ENCODE measurements at regions of chr5 and their contacts with region 1.

Region 1: GRCh38 chr5:68711293-68712200 is 382.3 kb upstream of the SLC30A5 start:
- DNase-seq: peak in 1 of 2 donors; percentile 14
- ATAC-seq: peak in 1 of 2 donors; percentile 36
- H3K4me3 ChIP-seq: no peak overlapping the region
- H3K27ac ChIP-seq: peak overlapping the region; percentile 79 to 84 (median 82)
- H3K4me1 ChIP-seq: peaks cover 31 to 50% of the 10 kb centered on the region in 2 donors
- H3K27me3 ChIP-seq: no peaks in the 10 kb centered on the region
- CTCF ChIP-seq: no peak
- POLR2A ChIP-seq: no peak

Region 2: GRCh38 chr5:68343421-68343826 is 368.1 kb before region 1 on chr5:
- in situ Hi-C with region 1: no loop called
- intact Hi-C with region 1: loop called (anchors 5 kb)
- DNase-seq: peak; percentile 85 to 89
- ATAC-seq: peak; percentile 98 to 99
- H3K4me3 ChIP-seq: no peak overlapping the region
- H3K27ac ChIP-seq: peak overlapping the region; percentile 57 to 76 (median 68)
- H3K4me1 ChIP-seq: peaks cover 7 to 20% of the 10 kb centered on the region in 2 donors
- H3K27me3 ChIP-seq: no peaks in the 10 kb centered on the region
- CTCF ChIP-seq: no peak
- POLR2A ChIP-seq: no peak

Region 3: DNA sequence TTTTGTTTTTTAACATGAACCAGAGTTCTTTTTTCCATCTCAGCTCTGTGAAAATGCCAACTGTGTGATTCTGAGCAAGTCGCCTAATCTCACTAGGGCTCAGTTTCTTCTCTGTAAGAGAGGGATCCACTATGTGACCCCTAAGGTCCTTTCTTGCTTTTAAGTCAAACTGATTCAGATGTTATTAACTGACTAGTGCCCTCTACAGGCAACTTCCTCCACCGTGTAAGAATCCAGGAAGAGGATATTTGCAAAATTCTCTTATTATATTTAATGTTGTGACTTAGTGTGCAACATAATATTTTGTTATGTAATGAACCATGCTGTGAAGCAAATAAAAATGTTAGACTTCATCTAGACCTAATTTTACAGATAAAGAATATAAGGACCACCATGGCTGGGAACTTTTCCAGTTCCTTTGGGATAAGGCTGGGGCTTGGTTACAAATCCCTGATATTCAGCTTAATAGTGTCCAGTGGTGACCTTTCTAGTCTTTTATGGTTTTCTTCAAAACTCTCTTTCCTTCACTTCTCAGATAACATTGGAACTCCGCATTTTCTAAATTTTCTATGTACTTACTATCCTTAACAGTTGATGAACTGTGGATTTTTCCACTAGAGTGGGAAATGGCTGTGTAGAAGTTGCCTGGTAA is 251.3 kb before region 1 on chr5:
- in situ Hi-C with region 1: no loop called
- intact Hi-C with region 1: loop called (anchors 5 kb)
- DNase-seq: no peak
- ATAC-seq: peak in 1 of 2 donors; percentile 63
- H3K4me3 ChIP-seq: no peak overlapping the region
- H3K27ac ChIP-seq: no peak overlapping the region
- H3K4me1 ChIP-seq: peaks cover 0 to 16% of the 10 kb centered on the region in 2 donors
- H3K27me3 ChIP-seq: no peaks in the 10 kb centered on the region
- CTCF ChIP-seq: peak; percentile 52 to 71 (median 62)
- POLR2A ChIP-seq: no peak

Region 4: GRCh38 chr5:68725905-68726683 is 14.5 kb after region 1 on chr5:
- in situ Hi-C with region 1: no loop called
- intact Hi-C with region 1: loop called (anchors 2 kb)
- DNase-seq: no peak
- ATAC-seq: peak; percentile 69 to 79
- H3K4me3 ChIP-seq: no peak overlapping the region
- H3K27ac ChIP-seq: peak overlapping the region in 2 of 4 donors; percentile 42 to 61
- H3K4me1 ChIP-seq: peaks cover 27 to 29% of the 10 kb centered on the region in 2 donors
- H3K27me3 ChIP-seq: no peaks in the 10 kb centered on the region
- CTCF ChIP-seq: no peak
- POLR2A ChIP-seq: no peak

Region 5: GRCh38 chr5:68770551-68770950 is 59.0 kb after region 1 on chr5:
- in situ Hi-C with region 1: no loop called
- intact Hi-C with region 1: loop called (anchors 5 kb)
- DNase-seq: peak; percentile 2 to 19
- ATAC-seq: peak; percentile 69 to 88
- H3K4me3 ChIP-seq: no peak overlapping the region
- H3K27ac ChIP-seq: peak overlapping the region; percentile 16 to 62 (median 52)
- H3K4me1 ChIP-seq: peaks cover 19 to 28% of the 10 kb centered on the region in 2 donors
- H3K27me3 ChIP-seq: no peaks in the 10 kb centered on the region
- CTCF ChIP-seq: no peak
- POLR2A ChIP-seq: no peak

Region 6: GRCh38 chr5:68803881-68804319 is 92.4 kb after region 1 on chr5:
- in situ Hi-C with region 1: no loop called
- intact Hi-C with region 1: loop called (anchors 1 kb)
- DNase-seq: peak; percentile 69 to 80
- ATAC-seq: peak; percentile 88 to 90
- H3K4me3 ChIP-seq: no peak overlapping the region
- H3K27ac ChIP-seq: peak overlapping the region; percentile 67 to 83 (median 74)
- H3K4me1 ChIP-seq: peaks cover 38 to 40% of the 10 kb centered on the region in 2 donors
- H3K27me3 ChIP-seq: no peaks in the 10 kb centered on the region
- CTCF ChIP-seq: no peak
- POLR2A ChIP-seq: no peak

Measured in gastrocnemius medialis (tissue), 4 donors.